PC-9 (cell line): ENCODE measurements at regions of chr12 and their contacts with region 1.

Region 1: GRCh38 chr12:57462251-57462911 is 2.8 kb downstream of the GLI1 start:
- DNase-seq: peak; percentile 74 to 88
- H3K4me3 ChIP-seq: peak overlapping the region; percentile 57
- H3K27ac ChIP-seq: no peak overlapping the region
- H3K4me1 ChIP-seq: peaks cover 23% of the 10 kb centered on the region
- H3K27me3 ChIP-seq: peaks cover 62% of the 10 kb centered on the region
- CTCF ChIP-seq: peak; percentile 92

Region 2: DNA sequence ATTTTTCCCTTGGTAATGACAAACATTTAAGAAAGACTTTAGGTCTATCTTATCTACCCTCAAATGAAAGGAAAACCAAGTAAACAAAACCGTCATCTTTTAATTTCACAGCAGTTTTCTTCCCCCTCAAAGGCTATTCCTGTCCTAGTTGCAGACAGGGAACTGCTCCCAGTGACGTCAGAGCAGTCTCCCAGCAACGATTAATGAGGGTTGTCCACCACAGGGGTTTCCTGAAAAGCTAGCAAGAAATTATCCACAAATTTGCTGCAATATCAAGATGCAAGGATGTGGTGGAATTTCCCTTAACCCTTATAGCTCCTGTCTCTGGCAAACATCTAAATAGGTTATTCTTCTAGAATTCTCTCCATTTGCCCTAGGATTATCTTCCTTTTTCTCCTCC is 122.3 kb before region 1 on chr12:
- CTCF ChIA-PET with region 1: no interaction called
- POLR2A ChIA-PET with region 1: no interaction called
- intact Hi-C with region 1: no loop called
- DNase-seq: no peak
- H3K4me3 ChIP-seq: no peak overlapping the region
- H3K27ac ChIP-seq: no peak overlapping the region
- H3K4me1 ChIP-seq: no peaks in the 10 kb centered on the region
- H3K27me3 ChIP-seq: no peaks in the 10 kb centered on the region
- CTCF ChIP-seq: no peak

Region 3: GRCh38 chr12:57632694-57633477 is 170.5 kb after region 1 on chr12 and contains the start of gene B4GALNT1:
- CTCF ChIA-PET with region 1: no interaction called
- POLR2A ChIA-PET with region 1: no interaction called
- intact Hi-C with region 1: loop called (anchors 5 kb)
- DNase-seq: peak; percentile 40 to 72
- H3K4me3 ChIP-seq: peak within 1 kb of the TSS; percentile 64
- H3K27ac ChIP-seq: no peak within 1 kb of the TSS
- H3K4me1 ChIP-seq: peaks cover 8% of the 10 kb centered on the region; the same call in 1 of the 2 replicates
- H3K27me3 ChIP-seq: no peaks in the 10 kb centered on the region
- CTCF ChIP-seq: peak; percentile 83
- total RNA-seq, gene B4GALNT1: 15.0 and 17.9 TPM in 2 replicates